RWPE1 (cell line): ENCODE measurements at regions of chr1 and their contacts with region 1.

Region 1: GRCh38 chr1:45512641-45513054 is 9.0 kb downstream of the PRDX1 start:
- DNase-seq: peak; percentile 42
- H3K27ac ChIP-seq: no peak overlapping the region
- CTCF ChIP-seq: peak; percentile 72

Region 2: DNA sequence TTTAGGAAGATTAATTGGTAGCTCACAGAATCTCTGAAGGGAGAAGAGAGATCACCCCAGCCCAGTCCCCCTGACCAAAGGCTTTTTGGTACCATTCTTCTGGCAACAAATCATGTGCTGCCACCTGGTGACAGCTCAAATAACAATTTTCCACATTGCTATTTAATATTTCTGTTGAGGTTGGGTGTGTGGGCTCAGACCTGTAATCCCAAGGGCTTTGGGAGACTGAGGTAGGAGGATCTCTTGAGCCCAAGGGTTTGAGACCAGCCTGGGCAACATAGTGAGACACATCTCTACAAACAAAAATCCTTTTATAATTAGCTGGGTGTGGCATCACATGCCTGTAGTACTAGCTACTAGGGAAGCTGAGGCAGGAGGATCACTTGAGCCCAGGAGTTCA is 19.5 kb before region 1 on chr1:
- CTCF ChIA-PET with region 1: no interaction called
- POLR2A ChIA-PET with region 1: no interaction called
- DNase-seq: peak; percentile 49
- H3K27ac ChIP-seq: no peak overlapping the region
- CTCF ChIP-seq: peak; percentile 78

Region 3: DNA sequence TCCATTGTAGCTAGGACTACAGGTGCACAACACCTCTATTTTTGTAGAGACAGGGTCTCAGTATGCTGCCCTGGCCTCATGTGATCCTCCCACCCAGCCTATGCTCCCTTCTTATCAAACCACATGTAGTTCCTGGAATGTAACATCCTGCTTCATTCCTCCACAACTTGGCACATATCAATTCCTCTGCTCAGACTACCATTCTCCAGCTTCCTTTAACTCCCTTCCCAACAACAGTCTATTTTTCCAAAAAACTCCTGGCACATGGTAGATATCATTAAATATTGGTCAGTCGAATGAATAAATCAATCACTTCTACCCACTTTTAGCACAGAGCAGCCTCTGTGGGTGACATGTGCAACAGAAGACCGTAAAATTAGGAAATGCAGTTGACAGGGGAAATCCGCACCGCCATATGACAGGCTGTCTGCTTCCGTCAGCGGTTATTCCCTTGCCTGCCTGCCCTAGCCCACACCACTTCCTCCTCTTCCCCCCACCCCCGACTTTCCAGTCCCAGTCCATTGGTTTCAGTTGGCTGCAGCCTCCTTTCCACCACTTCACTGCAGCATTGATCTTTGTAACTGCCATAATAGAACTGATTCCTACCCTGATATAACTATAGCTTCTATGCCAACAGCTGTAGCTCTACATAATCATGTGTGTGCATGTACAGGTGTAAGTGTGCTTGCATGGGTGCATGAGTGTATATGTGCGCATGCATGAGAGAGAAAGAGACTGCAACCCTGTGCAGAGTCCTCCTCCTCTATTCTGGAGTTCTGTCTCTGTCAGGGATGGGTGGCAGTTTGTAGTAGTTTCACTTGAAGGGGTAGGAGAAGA is 31.2 kb after region 1 on chr1:
- CTCF ChIA-PET with region 1: no interaction called
- POLR2A ChIA-PET with region 1: interaction called, 13 read pairs
- DNase-seq: no peak
- H3K27ac ChIP-seq: no peak overlapping the region
- CTCF ChIP-seq: no peak

Region 4: DNA sequence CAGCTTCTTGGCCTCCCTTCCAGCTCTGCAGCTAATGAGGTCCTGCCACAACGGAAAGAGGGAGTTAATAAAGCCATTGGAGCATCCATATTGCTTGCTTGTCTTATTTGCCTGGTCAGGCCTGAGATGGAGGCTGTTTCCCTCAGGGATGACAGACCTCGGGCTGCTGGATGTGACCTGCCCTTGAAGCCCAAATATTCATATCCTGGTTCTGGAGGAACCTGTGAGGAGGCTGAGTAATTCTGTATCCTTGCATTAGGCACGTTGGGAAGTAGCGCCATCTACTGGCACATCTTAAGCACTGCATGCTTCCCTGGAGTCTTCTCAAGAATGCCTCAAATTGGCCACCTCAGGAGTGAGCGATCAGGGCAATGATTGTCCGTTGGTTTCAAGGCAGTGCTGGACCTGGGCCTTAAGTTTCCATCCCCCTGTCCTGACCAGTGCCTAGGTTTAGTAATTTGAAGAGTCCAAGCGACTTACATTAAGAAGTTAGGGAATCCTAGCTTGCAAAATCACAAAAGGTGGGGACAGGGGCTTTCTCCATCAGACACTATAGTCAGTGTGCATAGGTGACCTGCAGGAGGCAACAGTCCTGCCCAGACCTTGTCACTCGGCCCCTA is 57.4 kb after region 1 on chr1:
- CTCF ChIA-PET with region 1: interaction called, 14 read pairs
- POLR2A ChIA-PET with region 1: no interaction called
- DNase-seq: peak; percentile 70
- H3K27ac ChIP-seq: peak overlapping the region; percentile 22; the same call in 1 of the 2 replicates
- CTCF ChIP-seq: peak; percentile 96